ENCODE measurements at regions of chr4 and their contacts with region 1.

Region 1: GRCh38 chr4:138035781-138036258 is 206.3 kb downstream of the SLC7A11 start:
- DNase-seq: peak; percentile 52
- ATAC-seq: peak; percentile 98
- H3K4me3 ChIP-seq: no peak overlapping the region
- H3K27ac ChIP-seq: no peak overlapping the region
- H3K4me1 ChIP-seq: no peaks in the 10 kb centered on the region
- H3K27me3 ChIP-seq: no peaks in the 10 kb centered on the region; a peak in 1 of 5 replicates
- CTCF ChIP-seq: peak; percentile 84
- EP300 ChIP-seq: no peak
- POLR2A ChIP-seq: no peak
- RAD21 ChIP-seq: peak; percentile 79

Region 2: GRCh38 chr4:138062929-138063328 is 27.1 kb after region 1 on chr4:
- CTCF ChIA-PET with region 1: no interaction called
- POLR2A ChIA-PET with region 1: no interaction called
- in situ Hi-C with region 1: no loop called
- intact Hi-C with region 1: no loop called
- DNase-seq: no peak
- ATAC-seq: peak; percentile 82
- H3K4me3 ChIP-seq: no peak overlapping the region
- H3K27ac ChIP-seq: no peak overlapping the region
- H3K4me1 ChIP-seq: no peaks in the 10 kb centered on the region
- H3K27me3 ChIP-seq: no peaks in the 10 kb centered on the region
- CTCF ChIP-seq: no peak
- EP300 ChIP-seq: no peak
- POLR2A ChIP-seq: no peak
- RAD21 ChIP-seq: no peak

Region 3: GRCh38 chr4:138097912-138098600 is 62.2 kb after region 1 on chr4:
- CTCF ChIA-PET with region 1: no interaction called
- POLR2A ChIA-PET with region 1: no interaction called
- in situ Hi-C with region 1: loop called (anchors 5 kb)
- intact Hi-C with region 1: no loop called
- DNase-seq: peak; percentile 80
- ATAC-seq: peak; percentile 100
- H3K4me3 ChIP-seq: no peak overlapping the region; a peak in 1 of 6 replicates
- H3K27ac ChIP-seq: peak overlapping the region; percentile 41
- H3K4me1 ChIP-seq: peaks cover 58% of the 10 kb centered on the region
- H3K27me3 ChIP-seq: no peaks in the 10 kb centered on the region
- CTCF ChIP-seq: peak; percentile 28; the same call in 1 of the 2 replicates
- EP300 ChIP-seq: peak in 1 of 2 experiments; percentile 64; a peak in 2 of 4 replicates
- POLR2A ChIP-seq: no peak
- RAD21 ChIP-seq: no peak

Region 4: DNA sequence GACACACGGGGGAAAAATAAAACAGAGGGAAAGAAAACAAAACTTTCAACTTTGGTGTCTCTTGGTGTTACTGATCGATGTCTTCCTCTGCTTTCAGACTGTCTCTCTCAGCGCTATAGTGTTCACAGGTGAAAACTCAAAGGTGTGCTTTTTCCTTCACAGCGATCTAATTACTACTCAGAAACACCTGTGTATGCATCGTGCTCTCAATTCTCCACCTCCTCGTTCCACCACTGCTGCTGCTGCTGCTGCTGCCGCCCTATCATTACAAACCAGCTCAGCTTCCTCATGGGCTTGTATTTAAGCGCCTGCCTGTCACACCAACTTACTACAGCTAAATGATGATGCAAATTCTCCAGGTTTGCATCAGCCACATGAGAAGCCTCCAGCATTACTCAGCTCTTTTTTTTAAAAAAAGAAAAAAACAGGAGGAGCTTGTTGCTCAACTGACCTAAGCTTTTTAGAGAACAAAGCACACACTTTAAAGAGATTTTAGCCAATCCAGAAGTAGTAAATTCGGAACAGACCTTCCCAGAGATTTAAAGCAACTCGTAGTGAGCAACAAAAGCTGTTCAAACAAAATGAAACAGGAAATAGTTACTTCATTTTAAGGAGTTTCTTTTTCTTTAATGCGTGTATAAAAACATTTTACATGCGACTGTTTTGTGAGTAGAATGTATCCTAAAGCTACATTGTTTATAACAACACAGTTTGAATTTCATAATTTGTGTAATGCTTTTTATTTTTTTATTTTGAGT is 206.4 kb after region 1 on chr4 and contains the start of gene SLC7A11:
- CTCF ChIA-PET with region 1: no interaction called
- POLR2A ChIA-PET with region 1: no interaction called
- in situ Hi-C with region 1: no loop called
- intact Hi-C with region 1: loop called (anchors 10 kb)
- DNase-seq: peak; percentile 97
- ATAC-seq: peak; percentile 97
- H3K4me3 ChIP-seq: peak within 1 kb of the TSS; percentile 77 to 96 (median 83)
- H3K27ac ChIP-seq: peak within 1 kb of the TSS; percentile 93
- H3K4me1 ChIP-seq: peaks cover 27% of the 10 kb centered on the region
- H3K27me3 ChIP-seq: no peaks in the 10 kb centered on the region; a peak in 1 of 5 replicates
- CTCF ChIP-seq: no peak
- EP300 ChIP-seq: peak in 1 of 2 experiments; percentile 91; a peak in 3 of 4 replicates
- POLR2A ChIP-seq: peak; percentile 74 to 96
- RAD21 ChIP-seq: no peak
- total RNA-seq, gene SLC7A11: 11.9 and 15.7 TPM in 2 replicates

Region 5: DNA sequence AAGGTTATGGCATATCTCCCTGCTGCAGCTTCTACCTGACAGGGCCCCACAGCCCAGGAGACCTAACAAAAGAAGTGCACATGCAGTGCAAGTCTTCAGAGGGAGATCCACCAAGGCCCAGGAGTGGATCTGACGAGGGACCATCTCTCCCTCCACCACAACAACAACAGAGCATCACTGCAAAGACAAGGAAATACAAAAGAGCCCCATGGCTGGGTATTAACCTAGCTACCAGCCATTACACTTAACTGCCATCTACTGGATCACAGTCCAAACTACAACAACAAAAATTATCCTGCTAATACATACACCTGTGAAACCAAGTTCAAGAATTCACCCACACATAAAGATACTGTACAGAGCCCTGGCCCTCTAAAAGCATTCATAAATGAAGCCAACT is 486.5 kb after region 1 on chr4:
- CTCF ChIA-PET with region 1: interaction called, 7 read pairs
- POLR2A ChIA-PET with region 1: no interaction called
- in situ Hi-C with region 1: loop called (anchors 25 kb)
- intact Hi-C with region 1: loop called (anchors 1 kb)
- DNase-seq: peak; percentile 3
- ATAC-seq: peak; percentile 90
- H3K4me3 ChIP-seq: no peak overlapping the region
- H3K27ac ChIP-seq: no peak overlapping the region
- H3K4me1 ChIP-seq: no peaks in the 10 kb centered on the region
- H3K27me3 ChIP-seq: no peaks in the 10 kb centered on the region
- CTCF ChIP-seq: peak; percentile 59
- EP300 ChIP-seq: no peak
- POLR2A ChIP-seq: no peak
- RAD21 ChIP-seq: 0 out of 2 replicates have a peak, but pooled peaks have one; percentile 19

Region 6: GRCh38 chr4:138576684-138577083 is 540.9 kb after region 1 on chr4:
- CTCF ChIA-PET with region 1: interaction called, 9 read pairs
- POLR2A ChIA-PET with region 1: no interaction called
- in situ Hi-C with region 1: no loop called
- intact Hi-C with region 1: loop called (anchors 1 kb)
- DNase-seq: peak; percentile 39
- ATAC-seq: peak; percentile 82
- H3K4me3 ChIP-seq: no peak overlapping the region
- H3K27ac ChIP-seq: no peak overlapping the region
- H3K4me1 ChIP-seq: no peaks in the 10 kb centered on the region
- H3K27me3 ChIP-seq: no peaks in the 10 kb centered on the region
- CTCF ChIP-seq: peak; percentile 65
- EP300 ChIP-seq: no peak
- POLR2A ChIP-seq: no peak
- RAD21 ChIP-seq: peak; percentile 52; the same call in 1 of the 2 replicates

Region 7: DNA sequence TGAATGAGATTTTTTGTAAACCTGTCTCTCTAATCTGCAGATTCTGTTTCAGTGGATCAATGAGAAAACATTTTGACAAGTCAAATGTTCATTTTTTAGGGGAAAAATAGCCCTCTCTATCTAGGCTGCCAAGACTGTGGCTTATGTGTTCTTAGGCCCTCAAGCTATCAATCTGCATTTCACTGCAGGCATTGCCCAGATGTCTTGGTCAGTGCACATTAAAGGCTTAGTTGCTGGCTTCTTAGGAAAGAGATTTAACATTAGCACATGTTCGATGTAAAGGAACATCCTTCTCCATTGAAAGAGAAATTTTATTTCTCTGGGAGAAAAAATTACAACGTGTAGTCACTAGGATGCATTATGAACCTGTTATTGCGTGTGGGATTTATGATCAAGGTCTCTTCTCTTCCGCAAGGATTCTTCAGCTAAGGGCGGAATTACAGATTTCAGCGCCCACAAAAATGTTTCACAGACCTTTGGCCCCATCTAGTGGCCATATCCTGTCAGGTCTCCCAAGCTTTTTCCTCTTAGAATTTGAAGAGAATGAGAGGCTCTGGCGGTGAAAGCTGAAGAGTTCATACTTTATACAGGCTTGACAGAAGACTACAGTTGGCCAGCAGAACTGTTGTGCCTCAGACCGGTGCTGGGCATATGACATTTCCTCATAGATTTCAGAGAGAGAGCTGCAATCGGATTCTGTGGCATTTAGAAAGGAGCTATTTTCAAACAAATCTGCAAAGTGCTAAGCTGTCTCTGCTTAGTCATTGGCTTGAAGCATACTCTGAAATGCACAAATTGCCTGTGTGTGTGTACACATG is 835.1 kb after region 1 on chr4:
- CTCF ChIA-PET with region 1: interaction called, 5 read pairs
- POLR2A ChIA-PET with region 1: no interaction called
- in situ Hi-C with region 1: no loop called
- intact Hi-C with region 1: loop called (anchors 1 kb)
- DNase-seq: peak; percentile 55
- ATAC-seq: peak; percentile 84
- H3K4me3 ChIP-seq: no peak overlapping the region
- H3K27ac ChIP-seq: no peak overlapping the region
- H3K4me1 ChIP-seq: no peaks in the 10 kb centered on the region
- H3K27me3 ChIP-seq: peaks cover 0 to 13% of the 10 kb centered on the region in 2 experiments; a peak in 3 of 5 replicates
- CTCF ChIP-seq: peak; percentile 82
- EP300 ChIP-seq: no peak
- POLR2A ChIP-seq: no peak
- RAD21 ChIP-seq: peak; percentile 84

Measured in HepG2 (cell line).